Colonic mucosa (tissue), 4 donors: ENCODE measurements at regions of chr15 and their contacts with region 1.

Region 1: DNA sequence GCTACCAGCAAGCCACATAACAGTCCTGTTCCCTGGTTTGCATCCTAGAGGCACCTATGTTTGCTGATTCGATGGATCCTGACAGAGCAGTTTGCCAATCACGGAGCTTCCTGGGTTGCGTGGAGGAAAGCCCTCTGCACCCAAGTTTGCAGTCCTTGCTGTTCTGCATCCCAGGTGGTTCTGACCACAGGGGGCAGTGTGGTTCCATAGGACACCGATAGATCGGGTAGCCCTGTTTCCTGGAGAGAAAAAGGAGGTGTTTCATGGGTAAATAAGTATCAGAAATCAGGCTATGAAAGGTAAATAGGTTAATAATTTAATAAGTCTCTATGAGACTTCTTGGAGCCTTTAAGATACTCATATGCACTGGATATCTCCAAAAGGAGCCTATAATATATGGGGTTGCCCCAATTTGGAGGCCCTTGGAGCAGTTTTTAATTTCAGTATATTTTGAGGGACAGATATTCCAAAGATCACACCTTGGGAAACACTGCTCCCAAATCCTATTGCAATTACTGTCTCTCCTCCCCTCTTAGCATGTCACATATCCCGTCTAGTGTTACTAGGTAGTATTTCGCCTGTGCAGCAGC is 194.6 kb upstream of the TPM1 start:
- DNase-seq: peak; percentile 84
- H3K4me3 ChIP-seq: no peak overlapping the region
- H3K27ac ChIP-seq: no peak overlapping the region
- H3K4me1 ChIP-seq: no peaks in the 10 kb centered on the region
- H3K27me3 ChIP-seq: no peaks in the 10 kb centered on the region
- CTCF ChIP-seq: peak; percentile 73

Region 2: GRCh38 chr15:63041974-63042819 is 194.2 kb after region 1 on chr15 and contains the start of gene TPM1:
- intact Hi-C with region 1: loop called (anchors 5 kb)
- DNase-seq: peak; percentile 85
- H3K4me3 ChIP-seq: peak within 1 kb of the TSS; percentile 64
- H3K27ac ChIP-seq: peak within 1 kb of the TSS; percentile 83
- H3K4me1 ChIP-seq: no peaks in the 10 kb centered on the region
- H3K27me3 ChIP-seq: no peaks in the 10 kb centered on the region
- CTCF ChIP-seq: no peak
- total RNA-seq, gene TPM1: 423 to 769 TPM

Region 3: GRCh38 chr15:63093486-63094205 is 245.7 kb after region 1 on chr15:
- intact Hi-C with region 1: loop called (anchors 5 kb)
- DNase-seq: peak; percentile 92
- H3K4me3 ChIP-seq: no peak overlapping the region
- H3K27ac ChIP-seq: no peak overlapping the region
- H3K4me1 ChIP-seq: no peaks in the 10 kb centered on the region
- H3K27me3 ChIP-seq: no peaks in the 10 kb centered on the region
- CTCF ChIP-seq: peak; percentile 80